Thyroid gland (tissue), 4 donors: ENCODE measurements at regions of chrX and their contacts with region 1.

Region 1: DNA sequence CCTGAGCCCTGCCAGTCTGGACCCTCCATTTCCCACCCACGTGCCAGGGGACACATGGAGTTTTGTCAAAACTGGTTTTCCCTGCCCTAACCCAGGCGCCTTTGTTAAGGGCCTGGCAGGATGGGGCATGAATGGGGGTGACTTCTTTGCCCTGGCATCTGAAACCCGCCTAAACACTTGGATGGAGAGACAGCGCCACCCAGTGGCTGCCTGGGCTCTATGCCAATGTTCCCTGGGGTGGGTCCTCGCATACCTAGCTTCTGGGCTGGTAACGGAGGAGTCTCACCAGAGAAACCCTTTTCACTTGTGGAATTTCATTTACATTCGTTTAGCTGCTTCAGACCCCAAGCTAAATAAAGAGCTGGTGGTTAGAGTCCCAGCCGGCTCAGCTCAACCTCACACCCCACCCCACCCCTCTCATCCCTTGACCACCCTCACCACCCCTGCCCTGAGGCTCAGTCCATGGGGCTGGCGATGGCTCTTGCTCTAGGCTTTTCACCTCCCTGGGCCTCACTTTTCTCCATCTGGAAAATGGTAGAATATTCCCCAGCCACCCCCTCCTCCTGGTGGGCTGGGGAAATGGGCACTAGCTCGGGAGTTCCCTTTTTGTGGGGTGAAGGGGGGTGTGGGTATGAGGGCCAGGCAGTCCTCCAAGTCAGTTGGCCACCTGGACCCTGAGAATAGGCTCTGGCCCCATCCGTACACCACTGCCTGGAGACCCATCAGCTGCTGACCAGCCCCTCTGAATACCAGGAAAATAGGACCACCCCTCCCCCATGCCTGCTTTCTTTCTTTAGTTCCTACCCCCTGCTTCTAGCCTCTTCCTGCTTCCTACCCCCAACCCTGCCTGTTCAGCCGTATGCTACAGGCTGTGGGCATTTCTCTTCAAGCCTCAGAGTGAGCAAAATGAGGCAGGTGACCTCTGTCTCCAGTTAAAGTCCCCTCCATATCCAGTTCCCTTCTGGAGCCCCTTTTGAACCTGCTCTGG is 57.1 kb upstream of the PJA1 start:
- DNase-seq: peak; percentile 74 to 78
- H3K4me3 ChIP-seq: no peak overlapping the region
- H3K27ac ChIP-seq: no peak overlapping the region
- H3K4me1 ChIP-seq: no peaks in the 10 kb centered on the region
- H3K27me3 ChIP-seq: no peaks in the 10 kb centered on the region
- CTCF ChIP-seq: peak; percentile 36 to 77 (median 69)
- POLR2A ChIP-seq: no peak

Region 2: DNA sequence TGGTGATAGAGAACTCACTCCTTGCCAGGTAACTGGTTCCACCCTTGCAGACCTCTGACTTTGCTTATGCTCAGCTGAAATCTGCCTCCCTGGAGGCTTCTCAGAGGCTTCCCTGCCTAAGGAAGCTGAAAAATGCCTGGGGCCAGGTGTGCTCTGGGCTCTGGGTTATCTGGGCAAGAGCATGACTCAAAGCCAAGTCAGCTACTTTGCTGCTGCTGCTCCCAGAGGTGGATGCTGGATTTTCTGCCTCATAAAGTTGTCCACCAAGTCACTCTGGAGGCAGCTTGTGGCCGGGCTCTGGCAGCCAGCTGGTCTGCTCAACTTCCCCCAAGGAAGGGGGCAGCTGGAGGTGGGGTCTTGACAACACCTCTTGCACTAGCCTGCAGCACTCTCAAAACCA is 189.8 kb before region 1 on chrX:
- intact Hi-C with region 1: no loop called
- DNase-seq: no peak
- H3K4me3 ChIP-seq: no peak overlapping the region
- H3K27ac ChIP-seq: no peak overlapping the region
- H3K4me1 ChIP-seq: no peaks in the 10 kb centered on the region
- H3K27me3 ChIP-seq: no peaks in the 10 kb centered on the region
- CTCF ChIP-seq: no peak
- POLR2A ChIP-seq: no peak

Region 3: DNA sequence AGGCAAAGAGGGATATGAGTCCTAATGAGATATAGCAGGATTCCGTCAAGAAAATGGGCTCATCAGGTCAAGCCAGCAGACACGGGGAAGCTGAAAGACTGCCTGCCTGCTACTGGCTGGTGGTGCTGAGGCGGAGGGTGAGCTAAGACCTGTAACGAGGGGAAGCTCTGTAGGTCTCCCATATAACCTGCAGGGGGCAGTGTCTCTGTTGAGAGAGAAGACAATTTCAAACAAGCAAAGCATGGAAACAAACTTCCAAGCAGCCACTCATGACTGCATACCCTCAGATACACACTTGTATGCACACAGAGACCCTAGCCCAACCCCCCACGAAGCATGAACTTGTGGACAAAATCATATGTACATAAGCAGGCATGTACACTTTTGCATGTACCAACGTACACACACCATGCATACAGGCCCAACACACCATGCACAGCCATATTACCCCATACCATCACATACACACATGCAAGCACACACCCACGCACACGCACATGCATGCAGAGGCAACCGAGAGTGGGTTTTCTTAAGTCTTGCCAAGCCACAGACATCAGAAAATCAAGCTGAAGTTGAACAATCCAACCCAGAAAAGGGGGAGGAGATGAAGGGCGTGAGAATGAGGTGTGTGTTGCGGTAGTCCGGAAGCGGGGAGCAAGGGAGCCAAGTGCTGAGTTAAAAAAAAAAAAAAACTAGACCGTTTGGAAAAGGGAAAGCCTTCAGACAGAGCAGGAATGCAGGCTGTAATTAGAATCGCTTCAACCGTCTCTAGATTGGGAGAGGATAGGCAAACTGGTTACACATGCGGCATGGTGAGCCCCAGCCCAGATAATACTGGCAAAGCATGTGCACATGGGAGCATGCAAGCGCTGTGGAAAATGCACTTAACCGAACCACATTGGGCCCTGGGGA is 128.2 kb before region 1 on chrX:
- intact Hi-C with region 1: loop called (anchors 5 kb)
- DNase-seq: peak; percentile 51 to 59
- H3K4me3 ChIP-seq: no peak overlapping the region
- H3K27ac ChIP-seq: no peak overlapping the region
- H3K4me1 ChIP-seq: no peaks in the 10 kb centered on the region
- H3K27me3 ChIP-seq: no peaks in the 10 kb centered on the region
- CTCF ChIP-seq: peak in 5 of 6 experiments; percentile 22 to 58 (median 46)
- POLR2A ChIP-seq: no peak

Region 4: DNA sequence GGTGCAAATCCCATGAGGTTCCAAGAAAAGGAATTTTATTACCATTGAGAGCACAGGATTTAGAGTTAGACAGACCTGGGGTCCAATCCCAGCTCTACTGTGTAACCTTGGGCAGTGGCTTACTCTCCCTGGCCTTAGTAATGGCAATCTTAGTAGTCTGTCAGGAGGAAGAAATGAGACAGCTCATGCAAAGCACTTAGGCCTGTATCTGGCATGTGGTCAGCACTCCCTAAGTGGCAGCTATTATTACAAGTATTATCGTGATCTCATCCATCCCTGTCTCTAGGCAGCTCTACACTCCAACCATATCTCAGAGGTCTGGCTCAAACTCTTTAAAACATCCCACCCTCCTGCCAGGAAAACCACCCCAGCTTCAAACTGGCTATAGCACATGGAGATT is 152.2 kb after region 1 on chrX:
- intact Hi-C with region 1: no loop called
- DNase-seq: no peak
- H3K4me3 ChIP-seq: no peak overlapping the region
- H3K27ac ChIP-seq: no peak overlapping the region
- H3K4me1 ChIP-seq: no peaks in the 10 kb centered on the region
- H3K27me3 ChIP-seq: no peaks in the 10 kb centered on the region
- CTCF ChIP-seq: no peak
- POLR2A ChIP-seq: no peak